ENCODE measurements at regions of chr11 and their contacts with region 1.

Region 1: DNA sequence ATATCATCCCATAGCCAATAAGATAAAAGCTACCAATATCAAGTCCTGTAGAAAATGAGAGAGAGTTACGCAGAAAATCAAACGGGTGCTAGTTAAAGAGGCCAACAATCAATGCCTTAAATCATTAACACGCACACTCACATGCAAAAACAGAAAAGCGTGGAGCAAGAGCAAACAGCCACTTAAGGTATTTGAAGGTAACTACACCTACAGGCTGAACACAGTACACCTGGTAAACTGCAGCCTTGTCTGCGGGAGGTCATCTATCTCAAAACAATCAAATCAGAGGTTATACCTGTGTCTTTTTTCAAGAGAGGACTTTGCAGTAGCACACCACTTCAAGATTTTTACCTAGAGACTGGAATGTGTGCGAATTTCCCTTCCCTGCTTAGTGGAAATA is 23.6 kb downstream of the SLC35F2 start:
- DNase-seq: no peak
- ATAC-seq: no peak
- H3K4me3 ChIP-seq: no peak overlapping the region
- H3K27ac ChIP-seq: no peak overlapping the region
- H3K4me1 ChIP-seq: peaks cover 11% of the 10 kb centered on the region
- H3K27me3 ChIP-seq: no peaks in the 10 kb centered on the region
- CTCF ChIP-seq: no peak
- EP300 ChIP-seq: no peak
- POLR2A ChIP-seq: no peak
- RAD21 ChIP-seq: no peak

Region 2: DNA sequence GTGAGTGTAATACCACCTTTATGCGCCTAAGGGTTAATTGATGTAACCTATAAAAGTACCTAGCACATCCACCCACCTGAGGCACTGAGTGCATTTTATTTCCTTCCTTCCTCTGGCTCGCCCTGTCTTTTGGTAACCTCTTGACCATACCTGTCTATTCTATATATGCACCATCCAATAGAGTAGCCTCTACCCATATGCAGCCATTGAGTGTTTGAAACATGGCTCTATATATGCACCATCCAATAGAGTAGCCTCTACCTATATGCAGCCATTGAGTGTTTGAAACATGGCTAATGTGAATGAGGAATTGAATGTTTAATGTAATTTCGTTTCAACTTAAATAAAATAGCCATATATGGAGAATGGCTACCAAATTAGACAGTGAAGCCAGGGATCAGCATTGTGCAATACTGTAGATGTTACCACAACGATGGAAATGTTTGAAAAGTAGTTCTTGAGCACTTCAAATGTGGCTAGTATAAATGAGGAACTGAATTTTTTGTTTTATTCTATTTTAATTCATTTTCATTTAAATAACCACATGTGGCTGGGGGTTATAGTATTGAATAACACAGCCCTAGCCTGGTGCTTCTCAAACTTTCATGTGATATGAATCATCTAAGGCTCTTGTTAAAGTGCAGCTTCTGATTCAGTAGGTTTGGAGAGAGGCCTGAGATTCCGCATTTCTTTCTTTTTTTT is 10.2 kb before region 1 on chr11:
- CTCF ChIA-PET with region 1: interaction called, 4 read pairs
- POLR2A ChIA-PET with region 1: interaction called, 5 read pairs
- RAD21 ChIA-PET with region 1: no interaction called
- SMC1A ChIA-PET with region 1: interaction called, 12 read pairs
- in situ Hi-C with region 1: no loop called
- intact Hi-C with region 1: no loop called
- DNase-seq: no peak
- ATAC-seq: peak; percentile 77
- H3K4me3 ChIP-seq: no peak overlapping the region
- H3K27ac ChIP-seq: peak overlapping the region; percentile 23; the same call in 1 of the 2 replicates
- H3K4me1 ChIP-seq: peaks cover 16% of the 10 kb centered on the region; the same call in 1 of the 2 replicates
- H3K27me3 ChIP-seq: no peaks in the 10 kb centered on the region
- CTCF ChIP-seq: no peak
- EP300 ChIP-seq: no peak
- POLR2A ChIP-seq: no peak
- RAD21 ChIP-seq: no peak

Region 3: GRCh38 chr11:107849790-107850189 is 14.8 kb after region 1 on chr11:
- CTCF ChIA-PET with region 1: interaction called, 4 read pairs
- POLR2A ChIA-PET with region 1: interaction called, 5 read pairs
- RAD21 ChIA-PET with region 1: interaction called, 19 read pairs
- SMC1A ChIA-PET with region 1: interaction called, 12 read pairs
- in situ Hi-C with region 1: no loop called
- intact Hi-C with region 1: no loop called
- DNase-seq: no peak
- ATAC-seq: peak; percentile 71
- H3K4me3 ChIP-seq: 0 out of 2 replicates have a peak overlapping the region, but pooled peaks have one; percentile 23
- H3K27ac ChIP-seq: no peak overlapping the region
- H3K4me1 ChIP-seq: peaks cover 16% of the 10 kb centered on the region
- H3K27me3 ChIP-seq: no peaks in the 10 kb centered on the region
- CTCF ChIP-seq: no peak
- EP300 ChIP-seq: no peak
- POLR2A ChIP-seq: no peak
- RAD21 ChIP-seq: no peak

Region 4: GRCh38 chr11:107864591-107864990 is 29.6 kb after region 1 on chr11:
- CTCF ChIA-PET with region 1: interaction called, 7 read pairs
- POLR2A ChIA-PET with region 1: interaction called, 28 read pairs
- RAD21 ChIA-PET with region 1: interaction called, 15 read pairs
- SMC1A ChIA-PET with region 1: interaction called, 23 read pairs
- in situ Hi-C with region 1: no loop called
- intact Hi-C with region 1: no loop called
- DNase-seq: no peak
- ATAC-seq: no peak; the same call in 2 of the 3 replicates
- H3K4me3 ChIP-seq: no peak overlapping the region
- H3K27ac ChIP-seq: peak overlapping the region; percentile 29; the same call in 1 of the 2 replicates
- H3K4me1 ChIP-seq: peaks cover 16% of the 10 kb centered on the region
- H3K27me3 ChIP-seq: no peaks in the 10 kb centered on the region
- CTCF ChIP-seq: no peak
- EP300 ChIP-seq: no peak
- POLR2A ChIP-seq: no peak
- RAD21 ChIP-seq: no peak